ENCODE measurements at regions of chr1 and their contacts with region 1.

Region 1: GRCh38 chr1:65687428-65688214 is 105.1 kb upstream of the PDE4B start:
- DNase-seq: peak; percentile 92
- H3K4me3 ChIP-seq: no peak overlapping the region
- H3K27ac ChIP-seq: no peak overlapping the region
- H3K4me1 ChIP-seq: peaks cover 3% of the 10 kb centered on the region
- H3K27me3 ChIP-seq: no peaks in the 10 kb centered on the region
- CTCF ChIP-seq: peak; percentile 97

Region 2: DNA sequence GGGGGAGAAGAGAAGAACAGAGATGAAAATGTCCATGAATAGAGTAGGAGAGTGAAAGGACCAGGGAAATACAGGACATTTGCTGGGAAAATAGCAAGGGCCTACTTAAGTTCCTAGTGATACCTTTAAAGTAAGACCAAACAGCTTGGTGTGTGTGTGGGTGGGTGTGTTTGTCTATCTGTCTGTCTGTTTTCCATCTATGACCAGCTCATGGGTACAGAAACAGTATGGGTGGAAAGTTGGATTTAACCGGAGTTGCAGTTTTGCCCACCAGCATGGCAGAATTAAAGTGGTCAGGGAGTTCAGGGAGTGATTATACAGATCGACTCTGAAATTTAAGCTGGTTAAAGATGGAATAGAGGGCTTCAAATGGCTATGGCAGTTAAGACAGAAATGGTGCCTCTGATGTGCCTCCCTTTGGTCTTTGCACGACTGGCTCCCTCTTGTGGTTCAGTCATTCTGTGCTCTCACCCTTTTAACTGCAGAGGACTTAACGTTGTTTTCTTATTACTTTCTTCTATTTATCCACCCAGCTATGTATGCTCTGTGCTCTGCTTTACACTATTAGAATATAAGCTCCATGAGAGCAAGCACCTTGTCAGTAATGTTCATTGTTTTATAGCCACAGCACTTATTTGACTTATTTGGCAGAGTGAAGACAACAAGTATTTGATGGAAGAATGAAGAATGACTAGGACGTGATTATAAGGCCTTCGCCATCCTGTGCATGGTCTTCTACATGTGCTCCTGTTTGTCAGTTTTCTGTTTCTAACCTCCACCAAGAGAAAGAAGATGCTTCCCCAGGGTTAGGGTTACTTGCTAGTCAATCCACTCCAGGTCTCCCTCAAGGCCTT is 612.3 kb before region 1 on chr1:
- intact Hi-C with region 1: loop called (anchors 10 kb)
- DNase-seq: peak; percentile 68
- H3K4me3 ChIP-seq: no peak overlapping the region
- H3K27ac ChIP-seq: no peak overlapping the region
- H3K4me1 ChIP-seq: no peaks in the 10 kb centered on the region
- H3K27me3 ChIP-seq: no peaks in the 10 kb centered on the region
- CTCF ChIP-seq: peak; percentile 71

Region 3: GRCh38 chr1:65235867-65236805 is 451.5 kb before region 1 on chr1:
- intact Hi-C with region 1: loop called (anchors 2 kb)
- DNase-seq: no peak
- H3K4me3 ChIP-seq: no peak overlapping the region
- H3K27ac ChIP-seq: no peak overlapping the region
- H3K4me1 ChIP-seq: no peaks in the 10 kb centered on the region
- H3K27me3 ChIP-seq: no peaks in the 10 kb centered on the region
- CTCF ChIP-seq: peak; percentile 33

Region 4: DNA sequence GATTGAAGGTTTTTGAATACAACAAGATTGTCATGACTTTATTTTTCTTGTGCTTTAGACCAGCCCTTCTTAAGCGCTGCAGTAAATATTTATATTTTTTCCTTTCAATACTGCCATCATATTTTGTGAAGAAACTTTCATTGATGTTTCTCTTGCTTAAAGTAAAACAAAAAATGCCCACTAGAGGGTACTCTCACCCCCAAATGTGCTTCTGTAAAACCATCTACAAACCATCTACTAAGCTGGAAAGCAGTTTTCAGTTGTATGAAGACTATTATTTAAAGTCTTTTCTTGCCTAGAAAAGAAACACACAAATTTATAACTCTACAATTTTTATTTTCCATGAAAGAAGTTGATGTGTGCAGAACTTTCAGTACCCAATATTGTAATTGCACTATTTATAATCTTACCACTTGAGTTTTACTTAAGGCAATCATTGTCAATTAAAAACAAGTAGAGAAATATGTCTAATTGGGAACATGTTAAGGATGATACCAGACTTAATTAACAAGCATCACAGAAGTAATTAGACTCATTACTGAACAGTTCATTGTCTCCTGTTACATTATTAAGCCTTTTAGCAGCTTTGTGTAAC is 256.4 kb before region 1 on chr1:
- intact Hi-C with region 1: loop called (anchors 5 kb)
- DNase-seq: no peak
- H3K4me3 ChIP-seq: no peak overlapping the region
- H3K27ac ChIP-seq: no peak overlapping the region
- H3K4me1 ChIP-seq: no peaks in the 10 kb centered on the region
- H3K27me3 ChIP-seq: no peaks in the 10 kb centered on the region
- CTCF ChIP-seq: peak; percentile 41

Measured in colonic mucosa (tissue), 4 donors.